CD8-positive, alpha-beta T cell (primary cell): ENCODE measurements at regions of chr9 and their contacts with region 1.

Region 1: DNA sequence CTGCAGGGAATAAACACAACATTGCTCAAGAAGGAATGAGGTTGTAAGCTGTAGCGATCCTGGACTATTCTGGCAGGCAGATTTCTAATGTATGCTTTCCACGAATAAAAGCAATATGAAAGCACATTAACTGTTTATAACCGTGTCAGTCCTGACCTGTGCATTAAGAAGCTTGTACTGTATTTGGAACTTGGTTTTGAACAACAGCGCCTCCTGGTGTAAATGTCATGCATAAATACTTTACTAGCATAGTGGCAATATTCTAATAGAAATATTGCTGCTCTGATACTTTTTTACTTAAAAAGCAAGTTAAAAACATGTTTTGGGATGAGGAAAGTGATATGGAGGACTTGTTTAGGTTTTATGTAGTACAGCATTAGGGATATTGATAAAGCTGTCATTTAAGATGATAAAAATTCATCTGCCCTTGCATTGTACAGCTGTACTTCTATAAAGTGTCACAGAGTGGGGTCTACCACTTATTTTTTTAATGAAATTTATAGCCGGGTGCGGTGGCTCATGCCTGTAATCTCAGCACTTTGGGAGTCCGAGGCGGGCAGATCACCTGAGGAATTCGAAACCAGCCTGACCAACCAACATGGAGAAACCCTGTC is 70.7 kb upstream of the GNE start:
- DNase-seq: peak in 5 of 9 experiments; percentile 11 to 76 (median 48)
- ATAC-seq: peak; percentile 75
- H3K4me3 ChIP-seq: no peak overlapping the region
- H3K4me3 Mint-ChIP-seq: no peak overlapping the region
- H3K27ac ChIP-seq: no peak overlapping the region
- H3K27ac Mint-ChIP-seq: no peak overlapping the region
- H3K4me1 ChIP-seq: no peaks in the 10 kb centered on the region
- H3K4me1 Mint-ChIP-seq: peaks cover 5% of the 10 kb centered on the region
- H3K27me3 ChIP-seq: no peaks in the 10 kb centered on the region
- H3K27me3 Mint-ChIP-seq: no peaks in the 10 kb centered on the region
- CTCF ChIP-seq: peak; percentile 92

Region 2: GRCh38 chr9:36142510-36143244 is 186.2 kb before region 1 on chr9:
- CTCF ChIA-PET with region 1: no interaction called
- POLR2A ChIA-PET with region 1: no interaction called
- intact Hi-C with region 1: no loop called
- DNase-seq: peak in 2 of 9 experiments; percentile 33 to 57
- ATAC-seq: peak; percentile 18
- H3K4me3 ChIP-seq: peak overlapping the region; percentile 42 to 59
- H3K4me3 Mint-ChIP-seq: peak overlapping the region; percentile 81
- H3K27ac ChIP-seq: peak overlapping the region; percentile 57 to 79
- H3K27ac Mint-ChIP-seq: peak overlapping the region; percentile 93
- H3K4me1 ChIP-seq: peaks cover 94% of the 10 kb centered on the region
- H3K4me1 Mint-ChIP-seq: peaks cover 95% of the 10 kb centered on the region
- H3K27me3 ChIP-seq: no peaks in the 10 kb centered on the region
- H3K27me3 Mint-ChIP-seq: no peaks in the 10 kb centered on the region
- CTCF ChIP-seq: no peak

Region 3: GRCh38 chr9:36250079-36250478 is 78.8 kb before region 1 on chr9:
- CTCF ChIA-PET with region 1: interaction called, 68 read pairs
- POLR2A ChIA-PET with region 1: no interaction called
- intact Hi-C with region 1: loop called (anchors 1 kb)
- DNase-seq: no peak
- ATAC-seq: no peak
- H3K4me3 ChIP-seq: no peak overlapping the region
- H3K4me3 Mint-ChIP-seq: no peak overlapping the region
- H3K27ac ChIP-seq: no peak overlapping the region
- H3K27ac Mint-ChIP-seq: no peak overlapping the region
- H3K4me1 ChIP-seq: no peaks in the 10 kb centered on the region
- H3K4me1 Mint-ChIP-seq: peaks cover 18% of the 10 kb centered on the region
- H3K27me3 ChIP-seq: no peaks in the 10 kb centered on the region
- H3K27me3 Mint-ChIP-seq: no peaks in the 10 kb centered on the region
- CTCF ChIP-seq: no peak